PC-9 (cell line): ENCODE measurements at regions of chr2 and their contacts with region 1.

Region 1: DNA sequence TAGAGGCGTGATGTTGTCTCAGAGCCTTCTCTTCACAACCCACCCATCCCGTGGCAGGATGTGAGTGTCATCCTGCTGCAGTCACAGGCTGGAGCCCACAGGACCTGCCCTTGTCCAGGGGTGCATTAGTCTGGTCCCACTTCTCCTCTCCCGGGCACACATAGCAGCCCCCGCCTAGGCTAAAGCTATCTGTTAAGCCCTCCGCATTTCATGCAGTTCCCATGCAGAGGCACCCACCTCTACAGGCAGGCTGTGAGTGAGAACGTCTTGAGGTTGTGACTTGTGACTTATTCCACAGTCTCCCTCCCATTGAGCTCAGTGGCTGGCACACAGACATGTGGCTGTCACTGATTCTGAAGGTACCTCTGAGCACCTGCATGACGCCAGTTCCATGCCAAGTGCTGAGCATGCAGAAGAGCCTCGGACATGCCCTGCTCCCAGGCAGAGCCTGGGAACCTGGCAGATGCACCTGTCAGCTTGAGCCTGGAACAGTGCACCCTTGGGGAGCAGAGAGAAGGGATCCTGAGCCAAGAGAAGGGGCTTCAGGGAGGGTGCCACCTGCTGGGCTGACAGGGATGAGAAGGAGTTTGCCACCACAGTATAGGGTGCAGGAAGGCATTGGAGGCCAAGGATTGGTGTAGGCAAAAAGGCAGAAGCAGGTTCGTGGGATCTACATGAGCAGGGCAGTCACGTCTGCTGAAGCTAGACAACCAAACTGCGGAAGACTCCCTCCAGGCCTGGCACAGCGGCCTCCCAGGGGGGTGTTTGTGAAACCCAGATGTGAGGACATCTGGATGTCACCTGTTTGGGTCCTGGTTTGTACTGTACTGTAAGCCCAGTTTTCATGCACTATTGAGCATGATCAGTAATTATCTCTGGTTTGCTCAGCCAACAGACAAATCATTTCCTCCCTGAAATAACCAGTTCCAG is 213.6 kb downstream of the GLI2 start:
- DNase-seq: peak in 1 of 2 experiments; percentile 33
- H3K4me3 ChIP-seq: no peak overlapping the region
- H3K27ac ChIP-seq: no peak overlapping the region
- H3K4me1 ChIP-seq: no peaks in the 10 kb centered on the region
- H3K27me3 ChIP-seq: no peaks in the 10 kb centered on the region
- CTCF ChIP-seq: peak; percentile 64

Region 2: DNA sequence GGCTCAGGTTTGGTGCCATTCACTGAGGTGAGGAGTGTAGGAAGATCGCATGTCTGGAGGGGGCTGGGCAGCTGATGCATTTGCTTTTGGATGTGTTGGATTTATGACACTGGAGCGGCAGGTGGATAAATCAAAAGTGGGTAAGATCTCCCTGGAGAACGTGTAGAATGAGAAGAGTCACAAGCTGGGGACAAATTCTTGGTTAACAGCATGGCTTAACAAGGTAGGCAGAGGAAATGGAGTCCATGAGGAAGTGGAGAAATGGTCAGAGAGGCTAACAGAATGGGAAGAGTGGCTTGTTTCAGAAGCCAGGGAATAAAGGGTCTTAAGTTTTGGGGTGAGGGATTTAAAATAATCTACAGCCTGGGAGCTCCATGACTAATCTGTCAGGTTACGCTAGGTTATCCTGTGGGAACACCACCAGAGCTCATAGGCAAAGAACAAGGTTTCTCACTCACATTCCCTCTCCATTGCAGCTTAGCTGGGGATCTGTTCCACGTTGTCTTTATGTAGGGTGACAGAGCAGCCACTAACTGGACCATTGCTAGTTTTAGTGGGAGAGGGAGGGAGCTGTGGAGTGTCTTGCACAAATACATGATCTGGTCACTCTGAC is 819.0 kb after region 1 on chr2:
- CTCF ChIA-PET with region 1: no interaction called
- POLR2A ChIA-PET with region 1: interaction called, 11 read pairs
- intact Hi-C with region 1: no loop called
- DNase-seq: no peak
- H3K4me3 ChIP-seq: no peak overlapping the region
- H3K27ac ChIP-seq: no peak overlapping the region
- H3K4me1 ChIP-seq: no peaks in the 10 kb centered on the region
- H3K27me3 ChIP-seq: no peaks in the 10 kb centered on the region
- CTCF ChIP-seq: no peak